Activated CD8-positive, alpha-beta T cell treated with anti-CD3 and anti-CD28 coated beads for 36 hours (primary cell): ENCODE measurements at regions of chr5 and their contacts with region 1.

Region 1: DNA sequence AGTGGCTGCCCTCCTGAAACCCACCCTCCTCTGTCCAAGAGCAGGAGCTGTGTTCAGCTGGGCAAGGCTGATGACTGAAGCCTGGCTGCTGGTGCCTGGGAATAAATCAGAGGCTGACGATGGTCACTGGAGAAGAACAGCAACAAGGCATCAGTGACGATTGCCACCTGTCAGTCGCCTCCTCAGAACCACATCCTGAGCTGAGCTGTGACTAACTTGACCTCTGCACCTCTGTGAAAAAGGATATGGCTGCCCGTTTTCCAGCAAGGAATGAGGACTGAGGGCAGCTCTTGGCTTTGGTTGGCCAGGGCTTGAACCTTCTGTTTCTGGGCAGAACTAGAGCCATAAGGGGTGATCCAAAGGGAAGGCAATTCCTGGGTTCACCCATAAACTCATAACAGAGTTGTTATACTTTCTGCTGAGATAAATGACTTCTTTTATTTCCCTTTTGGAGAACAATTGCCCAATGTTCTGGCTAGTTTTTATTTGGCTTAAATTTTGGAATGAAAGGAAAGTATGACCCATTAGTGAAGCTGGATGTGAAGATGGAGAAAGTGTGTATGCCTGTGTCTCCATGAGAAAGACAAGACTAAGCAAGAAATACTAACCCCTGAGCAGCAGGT is 40.1 kb downstream of the TRIP13 start:
- DNase-seq: peak; percentile 32
- ATAC-seq: peak; percentile 68
- H3K4me3 Mint-ChIP-seq: no peak overlapping the region
- H3K27ac Mint-ChIP-seq: peak overlapping the region; percentile 27
- H3K4me1 Mint-ChIP-seq: peaks cover 18% of the 10 kb centered on the region
- H3K27me3 Mint-ChIP-seq: peaks cover 10% of the 10 kb centered on the region
- CTCF ChIP-seq: no peak

Region 2: DNA sequence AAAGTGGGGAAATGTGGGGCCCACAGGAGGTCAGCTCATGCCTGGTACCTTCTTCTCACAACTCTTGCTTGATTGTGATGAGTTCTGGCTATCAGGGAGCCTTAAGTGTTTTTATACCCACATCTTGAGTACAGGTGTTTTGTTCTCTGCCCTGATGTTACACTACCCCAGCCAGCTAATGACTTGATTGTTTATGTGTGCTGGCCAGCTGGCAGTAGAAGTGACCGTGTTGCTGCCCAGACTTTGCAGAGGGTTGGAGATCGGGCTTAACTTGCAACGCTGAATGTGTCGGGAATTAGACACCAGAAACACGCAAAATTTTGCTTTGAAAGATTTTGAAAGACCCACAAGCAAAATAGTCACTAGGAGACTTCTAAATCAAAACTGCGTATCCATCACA is 131.3 kb before region 1 on chr5:
- CTCF ChIA-PET with region 1: no interaction called
- POLR2A ChIA-PET with region 1: no interaction called
- intact Hi-C with region 1: no loop called
- DNase-seq: no peak
- ATAC-seq: no peak
- H3K4me3 Mint-ChIP-seq: no peak overlapping the region
- H3K27ac Mint-ChIP-seq: no peak overlapping the region
- H3K4me1 Mint-ChIP-seq: no peaks in the 10 kb centered on the region
- H3K27me3 Mint-ChIP-seq: peaks cover 2% of the 10 kb centered on the region
- CTCF ChIP-seq: no peak

Region 3: DNA sequence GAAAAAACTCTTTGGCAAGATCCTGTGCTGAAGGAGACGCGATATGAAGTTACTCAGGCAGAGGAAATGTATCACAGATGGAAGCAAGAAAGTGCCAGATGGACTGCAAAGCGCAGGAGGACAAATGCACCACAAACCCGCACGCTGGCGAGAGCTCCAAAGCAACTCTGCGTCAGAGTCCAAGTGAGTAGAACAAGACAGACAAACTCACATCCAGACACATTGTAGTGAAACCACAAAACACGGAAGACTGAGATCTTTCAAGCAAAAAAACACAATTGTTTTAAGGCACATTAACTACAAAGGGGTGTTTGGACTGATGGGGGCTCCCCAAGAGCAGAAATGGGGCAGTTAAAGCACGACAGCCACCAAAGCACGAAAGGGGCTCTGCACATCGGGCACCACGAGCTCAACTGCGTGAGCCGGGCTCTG is 36.7 kb after region 1 on chr5:
- CTCF ChIA-PET with region 1: no interaction called
- POLR2A ChIA-PET with region 1: no interaction called
- intact Hi-C with region 1: loop called (anchors 5 kb)
- DNase-seq: peak; percentile 49
- ATAC-seq: peak; percentile 76
- H3K4me3 Mint-ChIP-seq: peak overlapping the region; percentile 6
- H3K27ac Mint-ChIP-seq: no peak overlapping the region
- H3K4me1 Mint-ChIP-seq: peaks cover 24% of the 10 kb centered on the region
- H3K27me3 Mint-ChIP-seq: peaks cover 52% of the 10 kb centered on the region
- CTCF ChIP-seq: no peak

Region 4: DNA sequence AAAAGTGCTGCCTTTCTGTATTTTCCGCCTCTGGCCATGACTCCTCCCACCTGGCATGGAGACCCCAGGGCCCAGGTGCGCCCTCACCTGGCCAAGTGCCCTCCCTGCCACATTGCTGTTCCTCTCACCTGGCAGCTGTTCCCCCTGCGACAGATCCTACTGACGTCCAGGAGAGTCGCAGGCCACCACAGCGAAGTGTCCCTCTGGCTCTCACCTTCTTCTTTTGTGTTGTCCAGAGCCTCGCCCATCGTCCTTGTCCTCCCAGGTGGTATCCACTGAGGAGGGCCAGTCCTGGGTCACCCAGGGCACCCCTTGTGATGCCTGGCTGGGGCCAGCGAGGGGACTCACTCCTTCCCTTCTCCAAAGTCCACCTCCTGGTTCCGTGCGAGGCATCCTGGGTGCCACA is 78.5 kb after region 1 on chr5:
- CTCF ChIA-PET with region 1: interaction called, 14 read pairs
- POLR2A ChIA-PET with region 1: no interaction called
- intact Hi-C with region 1: no loop called
- DNase-seq: peak; percentile 79
- ATAC-seq: peak; percentile 78
- H3K4me3 Mint-ChIP-seq: no peak overlapping the region
- H3K27ac Mint-ChIP-seq: no peak overlapping the region
- H3K4me1 Mint-ChIP-seq: peaks cover 14% of the 10 kb centered on the region
- H3K27me3 Mint-ChIP-seq: peaks cover 40% of the 10 kb centered on the region
- CTCF ChIP-seq: peak; percentile 60

Region 5: GRCh38 chr5:1021136-1021968 is 88.6 kb after region 1 on chr5:
- CTCF ChIA-PET with region 1: no interaction called
- POLR2A ChIA-PET with region 1: no interaction called
- intact Hi-C with region 1: no loop called
- DNase-seq: no peak
- ATAC-seq: no peak
- H3K4me3 Mint-ChIP-seq: no peak overlapping the region
- H3K27ac Mint-ChIP-seq: no peak overlapping the region
- H3K4me1 Mint-ChIP-seq: no peaks in the 10 kb centered on the region
- H3K27me3 Mint-ChIP-seq: no peaks in the 10 kb centered on the region
- CTCF ChIP-seq: no peak